Sigmoid colon (tissue), 7 donors: ENCODE measurements at regions of chr1 and their contacts with region 1.

Region 1: GRCh38 chr1:107782217-107782845 is 182.6 kb downstream of the VAV3 start:
- DNase-seq: no peak
- H3K4me3 ChIP-seq: no peak overlapping the region
- H3K27ac ChIP-seq: no peak overlapping the region
- H3K4me1 ChIP-seq: no peaks in the 10 kb centered on the region
- H3K27me3 ChIP-seq: no peaks in the 10 kb centered on the region
- CTCF ChIP-seq: peak; percentile 26 to 74 (median 52)
- EP300 ChIP-seq: no peak
- POLR2A ChIP-seq: no peak

Region 2: DNA sequence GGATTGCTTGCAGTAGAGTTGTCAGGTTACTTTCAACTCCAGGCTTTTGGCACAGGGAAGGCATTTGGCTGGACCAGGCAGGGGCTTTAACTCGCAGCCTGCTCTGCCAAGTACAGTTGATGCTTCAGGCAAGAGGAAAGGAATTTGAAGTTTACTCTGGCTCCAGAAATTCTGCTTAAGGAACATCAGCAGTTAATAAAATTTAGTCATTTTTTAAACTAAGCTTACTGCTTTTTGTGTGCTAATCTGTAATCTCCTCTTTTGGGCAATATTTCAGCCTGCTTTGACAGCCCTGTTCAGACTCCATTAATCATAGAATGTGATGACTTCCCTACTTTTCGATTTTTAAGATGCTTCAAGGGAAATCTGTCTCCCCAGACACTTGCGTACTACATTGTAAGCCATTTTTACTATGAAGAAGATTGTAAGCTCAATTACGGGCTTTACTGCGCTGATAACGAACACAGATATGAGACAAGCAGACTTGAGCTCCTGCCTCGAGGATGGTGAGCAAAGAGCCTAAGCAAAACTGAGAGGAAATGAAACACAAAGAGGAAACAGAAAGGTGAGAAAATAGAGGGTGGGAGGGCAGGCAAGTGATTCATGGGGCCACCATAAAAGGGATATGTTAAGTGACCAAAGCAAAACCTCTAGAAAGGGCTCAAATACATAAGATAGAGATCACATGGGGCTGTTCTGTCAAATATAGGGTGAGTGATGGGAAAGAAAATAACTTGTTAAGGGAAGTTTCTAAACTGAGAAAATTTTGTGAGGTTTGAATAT is 259.2 kb after region 1 on chr1:
- intact Hi-C with region 1: no loop called
- DNase-seq: no peak
- H3K4me3 ChIP-seq: no peak overlapping the region
- H3K27ac ChIP-seq: peak overlapping the region in 1 of 4 donors; percentile 5
- H3K4me1 ChIP-seq: peaks cover 0 to 21% (median 9%) of the 10 kb centered on the region in 4 donors
- H3K27me3 ChIP-seq: no peaks in the 10 kb centered on the region
- CTCF ChIP-seq: no peak
- EP300 ChIP-seq: no peak
- POLR2A ChIP-seq: no peak

Region 3: GRCh38 chr1:108125312-108126138 is 343.2 kb after region 1 on chr1:
- intact Hi-C with region 1: loop called (anchors 1 kb)
- DNase-seq: peak; percentile 83
- H3K4me3 ChIP-seq: no peak overlapping the region
- H3K27ac ChIP-seq: no peak overlapping the region
- H3K4me1 ChIP-seq: no peaks in the 10 kb centered on the region
- H3K27me3 ChIP-seq: peaks cover 0 to 6% (median 0%) of the 10 kb centered on the region in 3 donors
- CTCF ChIP-seq: peak; percentile 58 to 92 (median 73)
- EP300 ChIP-seq: no peak
- POLR2A ChIP-seq: no peak